ENCODE measurements at regions of chr16 and their contacts with region 1.

Region 1: DNA sequence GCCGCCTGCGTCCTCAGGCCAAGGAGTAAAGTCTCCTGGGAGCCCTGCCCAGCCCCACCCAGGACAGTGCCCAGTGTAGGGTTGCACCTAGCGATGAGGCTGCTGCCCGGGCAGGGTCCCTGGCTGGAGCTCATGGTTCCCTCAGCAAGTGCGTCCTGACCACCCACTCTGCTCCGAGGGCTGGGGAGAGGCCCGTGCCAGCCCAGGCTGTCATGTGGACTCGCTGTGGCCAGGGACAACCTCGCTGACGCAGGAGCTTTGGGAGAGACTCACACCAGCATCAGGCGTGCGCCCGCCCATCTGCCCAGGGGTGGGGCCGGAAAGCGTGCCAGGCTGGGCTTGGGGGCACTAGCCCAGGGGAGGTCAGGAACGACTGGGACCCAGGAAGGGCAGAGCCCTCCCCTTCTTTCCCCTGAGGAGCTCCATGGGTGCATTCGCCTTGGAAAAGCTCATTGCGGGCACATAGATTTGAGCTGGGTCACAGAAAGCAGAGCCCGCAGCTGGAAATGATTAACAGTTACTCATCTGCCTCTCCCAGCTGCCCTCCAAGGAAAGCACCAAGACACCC is 19.7 kb downstream of the DPEP1 start:
- DNase-seq: no peak
- H3K4me3 ChIP-seq: no peak overlapping the region
- H3K27ac ChIP-seq: no peak overlapping the region
- H3K27me3 ChIP-seq: peaks cover 0 to 33% (median 0%) of the 10 kb centered on the region in 45 donors
- CTCF ChIP-seq: no peak

Region 2: DNA sequence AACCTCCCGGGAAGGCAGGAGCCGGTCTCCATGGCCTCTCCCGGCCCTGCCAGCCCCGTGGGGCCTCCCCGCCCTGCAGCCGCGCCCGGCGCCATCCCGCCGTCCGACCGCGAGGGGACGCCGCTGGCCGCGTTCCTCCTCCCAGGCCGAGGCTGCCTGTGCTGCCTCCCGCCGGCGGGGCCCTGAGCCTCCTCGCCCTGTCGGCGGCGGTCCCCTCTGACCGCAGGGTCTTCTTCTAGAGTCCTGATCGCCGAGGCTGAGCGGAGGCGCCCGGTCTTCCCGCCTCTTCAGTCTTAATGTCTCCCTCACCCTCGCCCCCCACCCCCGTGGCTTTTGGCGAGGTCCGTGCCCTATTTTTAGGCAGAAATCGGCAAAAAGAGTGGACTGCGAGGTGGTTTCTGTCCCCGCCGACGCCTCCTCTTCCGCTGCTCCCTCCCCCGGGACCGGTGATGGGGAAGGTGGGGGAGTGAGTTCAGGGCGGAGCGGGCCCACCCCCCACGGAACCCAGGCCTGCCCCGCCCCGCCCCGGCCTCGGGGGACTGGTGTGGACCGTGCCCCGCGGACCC is 58.4 kb before region 1 on chr16:
- intact Hi-C with region 1: loop called in 1 of 2 experiments (anchors 5 kb)
- DNase-seq: no peak
- H3K4me3 ChIP-seq: peak overlapping the region in 49 of 59 donors; percentile 11 to 60 (median 37)
- H3K27ac ChIP-seq: no peak overlapping the region
- H3K27me3 ChIP-seq: peaks cover 0 to 42% (median 16%) of the 10 kb centered on the region in 45 donors
- CTCF ChIP-seq: peak in 31 of 56 donors; percentile 9 to 61 (median 29)

Region 3: DNA sequence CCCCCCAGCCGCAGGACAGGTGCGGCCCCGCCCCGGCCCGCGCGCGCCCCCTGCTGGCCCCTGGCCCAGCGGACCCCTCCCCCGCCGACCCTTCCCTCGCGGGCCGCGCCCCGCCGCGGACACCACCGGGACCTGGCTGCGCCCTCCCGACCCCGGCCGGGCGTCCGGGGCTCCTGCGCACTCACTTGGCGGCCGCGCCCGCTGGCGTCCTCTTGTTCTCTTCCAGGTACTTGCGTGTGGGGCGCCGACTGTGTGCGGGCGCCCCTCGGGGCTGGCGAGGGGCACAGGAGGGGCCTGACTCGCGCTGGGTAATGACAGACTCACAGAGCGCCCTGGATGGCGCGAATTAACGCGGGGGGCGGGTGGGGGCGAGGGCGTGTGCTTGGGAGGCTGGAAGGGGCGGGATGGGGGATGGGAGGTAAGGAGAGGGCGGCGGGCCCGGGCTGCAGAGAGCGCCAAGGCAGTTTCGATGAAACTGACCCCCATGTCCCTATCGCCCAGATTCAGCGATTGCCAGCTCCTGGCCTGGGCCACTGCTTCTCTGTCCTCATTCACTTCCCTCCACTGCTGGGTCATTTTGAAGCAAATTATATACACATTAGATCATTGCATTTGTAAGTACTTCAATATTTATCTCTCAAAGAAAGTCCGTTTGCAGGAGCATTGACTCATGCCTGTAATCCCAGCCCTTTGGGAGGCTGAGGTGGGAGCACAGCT is 386.6 kb after region 1 on chr16:
- intact Hi-C with region 1: no loop called
- DNase-seq: peak in 2 of 10 donors; percentile 37 to 60
- H3K4me3 ChIP-seq: peak overlapping the region; percentile 26 to 93 (median 67)
- H3K27ac ChIP-seq: peak overlapping the region in 55 of 59 donors; percentile 21 to 90 (median 74)
- H3K27me3 ChIP-seq: no peaks in the 10 kb centered on the region
- CTCF ChIP-seq: peak in 16 of 56 donors; percentile 11 to 45 (median 17)